ENCODE measurements at regions of chr1 and their contacts with region 1.

Region 1: DNA sequence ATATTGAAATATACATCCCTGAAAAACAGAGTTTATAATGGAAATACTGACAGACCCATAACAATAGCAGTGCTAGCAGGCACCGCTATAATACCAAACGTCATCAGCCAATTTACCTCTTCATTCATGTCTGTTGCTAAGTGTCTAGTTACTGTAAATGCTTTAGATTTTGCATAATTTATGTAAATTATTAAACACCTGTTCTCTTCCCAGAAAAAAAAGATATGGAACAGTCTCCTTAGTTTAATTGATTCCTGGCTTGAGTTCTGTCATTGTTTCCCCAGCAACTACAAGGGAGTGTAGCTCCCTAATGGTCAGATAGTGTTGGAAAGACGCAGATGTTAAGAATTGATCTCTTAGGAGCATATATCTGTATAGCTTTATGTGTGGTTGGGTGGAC is 817.9 kb upstream of the ADGRL2 start:
- DNase-seq: no peak
- H3K4me3 ChIP-seq: no peak overlapping the region
- H3K27ac ChIP-seq: no peak overlapping the region
- H3K4me1 ChIP-seq: no peaks in the 10 kb centered on the region
- H3K27me3 ChIP-seq: no peaks in the 10 kb centered on the region
- CTCF ChIP-seq: no peak
- EP300 ChIP-seq: no peak
- POLR2A ChIP-seq: no peak

Region 2: DNA sequence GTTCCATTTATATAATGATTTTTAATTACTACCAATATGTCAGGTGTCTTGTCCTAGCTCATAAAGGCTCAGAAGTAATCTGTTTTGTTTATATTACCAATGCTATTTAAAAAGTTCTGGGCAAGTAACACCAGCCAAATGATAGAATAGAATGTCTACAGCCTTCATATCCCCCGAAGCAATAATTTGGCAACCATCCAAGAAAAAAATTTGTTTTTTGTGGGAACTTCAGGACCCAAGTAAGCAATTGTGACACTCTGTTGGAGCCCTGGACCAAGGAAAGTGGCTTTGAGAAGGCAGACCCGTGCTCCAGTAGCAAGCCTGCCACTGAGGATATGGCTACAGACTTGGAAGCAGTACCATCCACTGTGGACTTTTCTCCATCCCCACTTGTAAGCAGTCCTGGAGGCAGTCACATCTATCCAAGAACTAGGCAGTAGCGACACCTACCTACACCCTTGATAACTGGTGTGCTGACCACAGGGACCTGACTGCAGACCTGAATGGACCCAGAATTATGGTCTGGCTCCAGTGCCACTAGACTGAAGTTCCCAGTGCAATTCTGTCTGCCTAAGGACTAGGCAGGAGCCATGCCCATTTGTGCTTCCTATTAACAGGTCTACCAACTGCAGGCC is 52.8 kb before region 1 on chr1:
- in situ Hi-C with region 1: no loop called
- intact Hi-C with region 1: loop called (anchors 5 kb)
- DNase-seq: no peak
- H3K4me3 ChIP-seq: no peak overlapping the region
- H3K27ac ChIP-seq: no peak overlapping the region
- H3K4me1 ChIP-seq: no peaks in the 10 kb centered on the region
- H3K27me3 ChIP-seq: no peaks in the 10 kb centered on the region
- CTCF ChIP-seq: no peak
- EP300 ChIP-seq: no peak
- POLR2A ChIP-seq: no peak

Region 3: DNA sequence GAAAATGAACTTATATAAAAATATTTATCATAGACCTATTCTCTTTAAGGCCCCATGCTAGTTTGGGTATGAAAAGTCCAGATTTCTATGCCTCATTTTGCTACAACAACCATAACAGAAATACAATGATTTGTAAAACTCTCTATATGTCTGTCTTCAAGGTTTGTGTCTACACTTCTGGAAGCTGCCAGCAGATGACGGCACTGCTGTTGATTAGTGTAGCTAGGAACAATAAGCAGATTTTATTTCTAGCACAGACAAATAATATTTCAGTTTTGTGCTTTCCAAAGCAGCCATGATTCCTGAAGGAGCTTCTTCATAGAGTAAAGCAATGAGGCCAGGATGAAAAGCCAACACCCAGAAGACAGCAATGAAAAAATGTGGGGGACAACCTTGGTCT is 38.3 kb after region 1 on chr1:
- in situ Hi-C with region 1: no loop called
- intact Hi-C with region 1: no loop called
- DNase-seq: no peak
- H3K4me3 ChIP-seq: no peak overlapping the region
- H3K27ac ChIP-seq: no peak overlapping the region
- H3K4me1 ChIP-seq: no peaks in the 10 kb centered on the region
- H3K27me3 ChIP-seq: no peaks in the 10 kb centered on the region
- CTCF ChIP-seq: no peak
- EP300 ChIP-seq: no peak
- POLR2A ChIP-seq: no peak

Region 4: DNA sequence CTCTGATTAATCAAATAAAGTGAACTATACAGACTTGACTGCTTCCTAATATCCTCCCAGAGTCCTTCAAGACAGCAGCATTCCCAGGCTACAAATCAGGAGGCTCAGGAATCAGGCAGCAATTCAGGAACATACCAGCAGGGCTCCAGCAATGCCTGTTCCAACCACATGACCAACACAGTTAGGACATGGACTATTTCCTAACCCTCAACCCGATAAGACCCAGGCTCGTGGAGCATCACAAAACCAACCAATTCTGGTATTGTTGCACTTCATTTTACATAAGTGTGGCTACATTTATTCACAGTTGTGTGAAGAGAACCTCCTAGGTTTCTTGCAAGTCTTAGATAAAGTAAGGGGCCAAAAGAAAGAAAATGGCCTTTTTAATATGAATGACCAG is 271.7 kb after region 1 on chr1:
- in situ Hi-C with region 1: no loop called
- intact Hi-C with region 1: no loop called
- DNase-seq: no peak
- H3K4me3 ChIP-seq: no peak overlapping the region
- H3K27ac ChIP-seq: no peak overlapping the region
- H3K4me1 ChIP-seq: no peaks in the 10 kb centered on the region
- H3K27me3 ChIP-seq: no peaks in the 10 kb centered on the region
- CTCF ChIP-seq: peak in 1 of 5 experiments; percentile 9
- EP300 ChIP-seq: no peak
- POLR2A ChIP-seq: no peak

Measured in transverse colon (tissue), 4 donors.